ENCODE measurements at regions of chr12 and their contacts with region 1.

Region 1: DNA sequence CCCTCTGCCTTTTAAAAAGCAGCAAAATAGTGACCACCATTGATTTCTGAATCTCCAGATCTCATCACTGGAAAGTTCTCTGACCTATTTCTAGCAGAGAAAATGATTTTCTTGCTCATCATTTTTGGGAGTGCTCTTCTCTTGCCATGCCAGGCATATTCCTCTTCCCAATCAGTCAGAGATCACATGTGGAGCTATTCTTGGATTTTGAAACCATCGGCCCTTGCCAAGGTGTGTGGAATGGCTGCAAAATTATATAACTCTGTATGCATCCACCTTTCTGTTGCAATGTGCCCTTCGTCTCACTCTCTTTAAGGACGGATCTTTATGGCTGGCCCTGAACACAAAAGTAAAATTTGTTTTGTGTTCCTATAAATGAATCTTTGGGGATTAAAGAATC is 25.5 kb upstream of the LDHB start:
- DNase-seq: no peak
- ATAC-seq: no peak
- H3K4me3 ChIP-seq: no peak overlapping the region
- H3K27ac ChIP-seq: no peak overlapping the region
- H3K4me1 ChIP-seq: no peaks in the 10 kb centered on the region
- H3K27me3 ChIP-seq: no peaks in the 10 kb centered on the region; the same call in 1 of the 2 replicates
- CTCF ChIP-seq: no peak

Region 2: GRCh38 chr12:20398686-20399085 is 1284.4 kb before region 1 on chr12:
- CTCF ChIA-PET with region 1: no interaction called
- POLR2A ChIA-PET with region 1: no interaction called
- in situ Hi-C with region 1: no loop called
- intact Hi-C with region 1: no loop called
- DNase-seq: no peak
- ATAC-seq: no peak
- H3K4me3 ChIP-seq: no peak overlapping the region
- H3K27ac ChIP-seq: no peak overlapping the region
- H3K4me1 ChIP-seq: no peaks in the 10 kb centered on the region
- H3K27me3 ChIP-seq: no peaks in the 10 kb centered on the region
- CTCF ChIP-seq: no peak

Region 3: GRCh38 chr12:21248679-21249078 is 434.4 kb before region 1 on chr12:
- CTCF ChIA-PET with region 1: no interaction called
- POLR2A ChIA-PET with region 1: no interaction called
- in situ Hi-C with region 1: no loop called
- intact Hi-C with region 1: loop called (anchors 5 kb)
- DNase-seq: no peak
- ATAC-seq: no peak
- H3K4me3 ChIP-seq: no peak overlapping the region
- H3K27ac ChIP-seq: no peak overlapping the region
- H3K4me1 ChIP-seq: no peaks in the 10 kb centered on the region
- H3K27me3 ChIP-seq: no peaks in the 10 kb centered on the region
- CTCF ChIP-seq: no peak

Region 4: DNA sequence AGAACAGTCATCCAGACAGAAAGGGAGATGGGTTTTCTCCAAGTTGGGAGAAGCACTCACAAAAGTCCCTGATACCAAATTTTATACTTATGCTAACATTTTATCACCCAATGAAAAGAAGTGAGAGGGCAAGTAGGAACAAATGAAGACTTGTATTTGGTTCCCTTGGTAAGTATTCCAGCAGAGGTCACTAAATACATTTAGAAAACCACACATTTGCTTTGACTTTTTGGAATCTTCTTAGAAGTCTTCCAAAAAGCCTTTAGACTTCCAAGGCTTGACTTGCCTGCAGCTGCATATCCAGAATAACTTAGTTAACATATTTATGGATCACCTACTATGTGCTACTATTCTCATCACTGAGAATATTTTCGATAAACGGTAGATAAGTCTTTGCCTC is 75.4 kb before region 1 on chr12:
- CTCF ChIA-PET with region 1: no interaction called
- POLR2A ChIA-PET with region 1: no interaction called
- in situ Hi-C with region 1: no loop called
- intact Hi-C with region 1: loop called (anchors 5 kb)
- DNase-seq: no peak
- ATAC-seq: no peak
- H3K4me3 ChIP-seq: no peak overlapping the region
- H3K27ac ChIP-seq: no peak overlapping the region
- H3K4me1 ChIP-seq: no peaks in the 10 kb centered on the region
- H3K27me3 ChIP-seq: no peaks in the 10 kb centered on the region; the same call in 1 of the 2 replicates
- CTCF ChIP-seq: peak; percentile 24; the same call in 1 of the 2 replicates

Measured in Panc1 (cell line).